Breast epithelium (tissue), 4 donors: ENCODE measurements at regions of chr21 and their contacts with region 1.

Region 1: DNA sequence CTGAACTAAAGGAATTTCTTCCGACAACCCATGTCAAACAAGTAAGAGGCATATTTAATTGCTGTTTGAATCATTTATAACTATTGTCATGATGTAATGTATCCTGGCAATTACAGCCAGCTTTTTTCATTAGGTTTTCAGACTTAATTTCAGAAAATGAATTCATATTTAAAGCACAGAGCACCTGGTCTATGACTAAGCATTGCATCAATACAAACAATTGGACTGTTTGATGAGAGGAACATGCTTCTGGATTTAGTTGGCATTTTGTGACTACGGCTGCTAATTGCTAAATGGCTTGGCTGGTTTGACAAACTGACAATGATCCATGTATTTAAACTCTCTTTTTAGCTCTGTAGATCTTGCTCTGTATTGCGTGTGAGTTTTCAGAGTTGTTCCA is 853.4 kb downstream of the NCAM2 start:
- DNase-seq: no peak
- H3K4me3 ChIP-seq: no peak overlapping the region
- H3K27ac ChIP-seq: no peak overlapping the region
- H3K4me1 ChIP-seq: no peaks in the 10 kb centered on the region
- H3K27me3 ChIP-seq: no peaks in the 10 kb centered on the region
- CTCF ChIP-seq: no peak
- POLR2A ChIP-seq: no peak

Region 2: GRCh38 chr21:21897275-21897866 is 45.7 kb after region 1 on chr21:
- intact Hi-C with region 1: no loop called
- DNase-seq: no peak
- H3K4me3 ChIP-seq: no peak overlapping the region
- H3K27ac ChIP-seq: no peak overlapping the region
- H3K4me1 ChIP-seq: no peaks in the 10 kb centered on the region
- H3K27me3 ChIP-seq: no peaks in the 10 kb centered on the region
- CTCF ChIP-seq: no peak
- POLR2A ChIP-seq: no peak

Region 3: DNA sequence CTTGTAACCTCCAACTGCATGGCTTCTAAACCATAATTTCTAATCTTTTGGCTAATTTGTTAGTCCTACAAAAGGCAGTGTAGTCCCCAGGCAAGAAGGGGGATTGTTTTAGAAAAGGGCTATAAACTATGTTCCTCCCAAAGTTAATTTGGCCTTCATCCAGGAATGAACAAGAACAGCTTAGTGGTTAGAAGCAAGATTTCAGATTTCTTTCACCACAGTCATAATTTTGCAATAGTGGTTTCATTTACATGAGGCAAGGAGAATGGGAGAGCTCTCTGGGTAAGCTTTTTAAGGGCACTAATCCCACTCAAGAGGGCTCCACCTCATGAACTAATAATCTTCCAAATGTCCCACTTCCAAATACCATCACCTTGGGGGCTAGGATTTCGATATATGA is 500.4 kb after region 1 on chr21:
- intact Hi-C with region 1: loop called (anchors 5 kb)
- DNase-seq: no peak
- H3K4me3 ChIP-seq: no peak overlapping the region
- H3K27ac ChIP-seq: no peak overlapping the region
- H3K4me1 ChIP-seq: no peaks in the 10 kb centered on the region
- H3K27me3 ChIP-seq: no peaks in the 10 kb centered on the region
- CTCF ChIP-seq: no peak
- POLR2A ChIP-seq: no peak